Activated T-helper 1 cell treated with anti-CD3 and anti-CD28 coated beads, Interleukin-12 subunit alpha, Interleukin-12 subunit beta, Interleukin-2, Interleukin-4 antibody, amounts not matched to agents 30 ng/mL and 10 ng/mL and 1 ng/mL, durations not matched to agents 14 hours and 24 hours and 36 hours (primary cell): ENCODE measurements at regions of chr1 and their contacts with region 1.

Region 1: DNA sequence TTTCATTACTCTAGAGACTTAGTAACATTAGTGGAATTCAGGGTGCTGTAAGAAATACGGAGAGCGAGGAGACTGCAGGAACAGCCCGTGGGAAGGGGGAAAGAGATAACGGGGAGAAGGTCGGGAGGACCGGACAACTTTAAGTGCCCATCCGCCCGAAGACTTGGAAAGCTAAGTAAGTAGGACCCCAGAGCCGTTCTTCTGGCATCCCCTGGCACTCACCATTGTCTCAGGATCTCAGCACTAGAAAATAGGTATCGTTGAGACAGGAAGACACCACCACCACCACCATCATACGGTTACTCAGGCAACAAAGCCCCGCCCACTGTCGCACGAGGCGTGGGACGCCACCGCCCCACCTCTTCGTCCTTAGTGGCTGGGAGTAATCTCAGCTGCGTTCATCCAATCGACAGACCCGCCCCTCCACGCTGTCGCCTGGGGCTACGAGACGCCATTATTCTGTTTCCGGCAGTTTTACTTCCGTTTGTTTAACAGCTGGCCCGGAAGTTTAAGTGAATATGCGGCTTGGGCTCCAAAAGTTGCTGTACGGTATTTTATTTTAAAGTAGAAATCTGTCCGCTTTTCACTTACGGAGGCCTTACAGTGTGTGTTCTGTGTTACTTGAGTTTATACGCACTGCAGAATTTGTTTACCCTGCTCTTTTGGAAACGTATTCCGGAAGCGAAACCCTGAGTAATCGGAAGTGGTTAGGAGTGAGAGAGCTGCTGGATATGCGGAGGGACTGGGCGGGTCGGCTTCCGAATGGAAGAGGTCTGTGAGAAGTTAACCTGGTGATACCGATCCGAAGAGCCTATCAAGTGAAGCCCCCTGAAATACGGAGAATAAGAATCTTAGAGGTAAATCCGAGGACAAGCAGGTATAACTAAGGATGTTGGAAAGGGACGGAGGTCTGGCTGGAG is at the starts of genes BLZF1 and NME7:
- DNase-seq: peak; percentile 99
- H3K4me3 Mint-ChIP-seq: no peak within 1 kb of the TSS
- H3K27ac Mint-ChIP-seq: peak within 1 kb of the TSS; percentile 36
- H3K4me1 Mint-ChIP-seq: peaks cover 35% of the 10 kb centered on the region
- H3K27me3 Mint-ChIP-seq: no peaks in the 10 kb centered on the region
- total RNA-seq, gene BLZF1: 15.1 and 16.1 TPM in 2 replicates
- total RNA-seq, gene NME7: 13.9 and 25.8 TPM in 2 replicates

Region 2: DNA sequence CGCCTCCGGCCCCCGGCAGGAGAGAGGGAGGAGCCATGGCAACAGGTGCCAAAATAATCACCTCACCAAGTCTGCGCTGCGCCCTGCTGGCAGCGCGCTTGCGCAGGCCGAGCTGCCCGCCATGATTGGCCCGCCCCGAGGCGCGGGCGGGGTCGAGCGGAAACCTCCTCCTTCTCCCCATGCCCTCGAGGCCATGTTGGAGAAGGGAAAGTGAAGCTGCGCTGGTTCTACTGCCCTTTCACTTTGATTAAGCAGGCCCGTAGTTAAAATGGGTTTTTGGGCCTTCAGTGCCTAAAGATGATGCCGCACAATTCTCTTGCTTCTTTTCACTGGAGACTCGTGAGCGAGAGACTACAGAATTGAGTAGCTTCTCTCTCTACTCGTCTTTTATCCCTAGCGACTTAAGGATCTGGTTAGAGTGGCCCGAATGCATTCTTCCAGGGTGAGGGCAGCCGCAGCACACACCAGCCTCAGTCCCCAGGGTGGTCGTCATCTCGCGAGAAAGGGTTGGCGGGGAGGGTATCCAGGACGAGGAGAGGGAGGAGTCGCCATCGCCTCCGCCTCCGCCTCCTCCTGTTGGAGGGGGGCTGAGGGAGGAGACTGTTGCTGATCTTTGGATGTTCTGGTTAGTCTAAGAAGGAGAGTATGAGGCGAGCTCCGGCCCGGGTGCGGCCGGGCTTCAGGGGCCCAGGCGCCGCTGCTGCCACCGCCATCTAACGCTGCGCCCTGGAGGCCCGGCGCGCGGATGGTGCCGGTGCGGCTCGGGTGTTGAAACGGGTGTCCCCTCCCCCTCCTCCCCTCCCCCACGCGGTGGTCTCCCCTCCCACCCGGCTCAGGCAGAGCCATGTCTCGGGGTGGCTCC is 1431.4 kb before region 1 on chr1 and contains the start of gene DCAF6:
- intact Hi-C with region 1: loop called (anchors 1 kb)
- DNase-seq: peak; percentile 98
- H3K4me3 Mint-ChIP-seq: peak within 1 kb of the TSS; percentile 91
- H3K27ac Mint-ChIP-seq: peak within 1 kb of the TSS; percentile 98
- H3K4me1 Mint-ChIP-seq: peaks cover 41% of the 10 kb centered on the region
- H3K27me3 Mint-ChIP-seq: no peaks in the 10 kb centered on the region
- total RNA-seq, gene DCAF6: 20.9 and 24.0 TPM in 2 replicates

Region 3: DNA sequence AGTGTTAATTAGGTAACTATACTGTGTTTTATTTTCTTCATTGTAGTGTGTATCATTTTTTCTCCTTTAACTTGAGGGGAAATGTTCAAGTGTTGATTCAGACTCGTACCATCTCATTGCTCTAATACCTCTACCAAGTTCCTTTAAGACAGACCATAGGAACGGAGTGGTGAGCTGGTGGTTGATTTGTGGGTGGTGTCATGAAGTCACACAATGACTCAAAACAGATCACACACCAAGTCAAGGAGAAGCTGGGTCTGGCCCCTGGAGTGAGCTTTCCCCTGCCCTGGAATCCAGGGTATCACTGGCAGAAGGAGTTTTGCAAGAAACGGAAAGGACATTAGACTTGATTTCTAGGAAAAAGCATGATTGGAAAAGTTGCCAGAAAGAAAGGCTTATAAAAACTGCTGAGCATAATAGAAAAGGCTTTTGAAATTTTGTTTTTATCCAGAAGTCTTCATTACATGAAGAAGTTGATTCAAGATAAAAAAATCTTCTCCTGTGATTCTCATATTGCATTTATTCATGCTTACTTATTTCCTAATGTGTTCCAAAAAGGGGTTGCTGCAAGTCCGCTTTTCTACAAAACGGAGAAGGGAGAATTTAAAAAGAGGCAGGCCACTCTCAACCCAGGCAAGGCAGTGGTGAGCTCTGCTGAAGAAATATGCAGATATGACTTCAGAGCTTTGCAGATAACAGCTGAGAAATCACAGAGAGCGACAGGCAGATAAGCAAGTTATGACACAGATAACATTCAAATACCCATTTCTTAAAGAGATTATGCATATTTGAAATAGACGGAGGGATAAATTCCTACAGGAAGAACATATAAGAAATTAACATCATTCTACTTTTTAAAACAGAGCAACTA is 1007.4 kb before region 1 on chr1:
- intact Hi-C with region 1: loop called (anchors 5 kb)
- DNase-seq: peak; percentile 36
- H3K4me3 Mint-ChIP-seq: peak overlapping the region; percentile 12
- H3K27ac Mint-ChIP-seq: peak overlapping the region; percentile 68
- H3K4me1 Mint-ChIP-seq: peaks cover 43% of the 10 kb centered on the region
- H3K27me3 Mint-ChIP-seq: peaks cover 3% of the 10 kb centered on the region

Region 4: GRCh38 chr1:169091480-169091941 is 276.2 kb before region 1 on chr1:
- intact Hi-C with region 1: loop called (anchors 5 kb)
- DNase-seq: no peak
- H3K4me3 Mint-ChIP-seq: no peak overlapping the region
- H3K27ac Mint-ChIP-seq: no peak overlapping the region
- H3K4me1 Mint-ChIP-seq: peaks cover 12% of the 10 kb centered on the region
- H3K27me3 Mint-ChIP-seq: peaks cover 6% of the 10 kb centered on the region

Region 5: GRCh38 chr1:169383449-169383848 is 15.7 kb after region 1 on chr1:
- intact Hi-C with region 1: loop called (anchors 1 kb)
- DNase-seq: no peak
- H3K4me3 Mint-ChIP-seq: no peak overlapping the region
- H3K27ac Mint-ChIP-seq: no peak overlapping the region
- H3K4me1 Mint-ChIP-seq: no peaks in the 10 kb centered on the region
- H3K27me3 Mint-ChIP-seq: no peaks in the 10 kb centered on the region

Region 6: DNA sequence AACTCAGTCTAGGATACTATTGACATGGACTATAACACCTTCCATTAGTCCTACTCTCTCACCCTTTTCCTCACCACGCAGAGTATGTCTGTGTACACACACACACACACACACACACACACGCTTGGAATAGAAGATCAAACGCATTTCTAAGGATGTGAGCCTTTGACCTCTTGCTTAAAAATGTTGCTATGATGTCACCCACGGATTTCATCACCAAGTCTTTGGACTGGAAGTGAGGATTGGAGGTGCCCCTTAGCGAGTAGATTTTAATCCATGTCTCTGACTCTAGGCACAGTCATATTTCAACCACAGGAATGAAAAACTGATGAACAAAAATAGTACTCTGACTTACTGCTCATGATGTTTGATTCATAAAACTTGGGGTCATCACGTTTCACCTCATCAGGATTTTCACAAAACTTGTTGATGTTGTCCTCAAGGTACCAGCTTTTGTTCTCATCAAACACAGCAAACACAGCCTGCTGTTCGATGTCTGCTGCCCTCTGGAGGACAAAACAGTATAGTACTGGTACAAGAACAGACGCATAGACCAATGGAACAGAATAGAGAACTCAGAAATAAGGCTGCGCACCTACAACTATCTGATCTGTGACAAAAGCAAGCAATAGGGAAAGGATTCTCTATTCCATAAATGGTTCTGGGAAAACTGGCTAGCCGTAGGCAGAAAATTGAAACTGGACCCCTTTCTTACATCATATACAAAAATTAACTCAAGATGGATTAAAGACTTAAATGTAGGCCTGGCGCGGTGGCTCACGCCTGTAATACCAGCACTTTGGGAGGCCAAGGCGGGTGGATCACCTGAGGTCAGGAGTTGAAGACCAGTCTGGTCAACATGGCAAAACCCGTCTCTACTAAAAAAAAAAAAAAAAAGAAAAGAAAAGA is 178.6 kb after region 1 on chr1:
- intact Hi-C with region 1: loop called (anchors 1 kb)
- DNase-seq: peak; percentile 40
- H3K4me3 Mint-ChIP-seq: no peak overlapping the region
- H3K27ac Mint-ChIP-seq: no peak overlapping the region
- H3K4me1 Mint-ChIP-seq: peaks cover 9% of the 10 kb centered on the region
- H3K27me3 Mint-ChIP-seq: no peaks in the 10 kb centered on the region

Region 7: DNA sequence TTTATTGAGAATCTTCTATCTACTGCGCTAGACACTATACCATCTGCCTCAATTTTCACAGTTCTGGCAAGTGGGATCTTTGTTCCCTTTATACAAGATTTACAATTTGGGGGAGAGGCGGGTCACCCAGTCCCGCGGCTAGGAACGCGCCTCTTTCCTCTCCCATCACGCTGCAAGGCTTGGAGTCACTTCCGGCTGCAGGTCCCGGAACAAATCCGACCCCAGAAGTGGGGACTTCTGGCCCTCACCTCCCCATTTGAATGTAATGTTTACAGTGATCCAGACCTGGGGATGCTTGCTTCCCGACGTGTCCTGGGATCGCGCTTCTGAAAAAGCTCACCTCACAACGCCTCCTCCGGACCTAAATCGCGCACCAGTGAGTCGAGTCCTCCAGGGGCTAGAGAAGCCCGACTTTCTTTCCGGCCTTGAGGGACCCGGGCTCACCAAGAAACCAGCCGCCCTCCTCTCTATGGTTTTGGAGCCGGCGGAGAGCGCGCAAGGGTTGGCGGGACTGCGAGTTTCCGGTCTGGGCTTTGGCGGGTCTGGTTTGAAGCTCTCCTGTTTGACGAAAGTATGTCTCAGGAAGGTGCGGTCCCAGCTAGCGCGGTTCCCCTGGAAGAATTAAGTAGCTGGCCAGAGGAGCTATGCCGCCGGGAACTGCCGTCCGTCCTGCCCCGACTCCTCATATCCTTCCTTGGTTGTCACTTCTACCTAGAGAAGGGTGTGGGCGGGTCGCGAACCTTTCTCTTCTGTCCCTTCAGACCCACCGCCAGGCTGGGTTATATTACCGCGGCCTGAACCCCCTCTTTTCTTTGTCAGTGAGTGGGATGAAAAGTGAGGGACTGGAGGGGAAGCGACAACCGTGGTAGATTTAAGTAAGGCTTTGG is 427.0 kb after region 1 on chr1 and contains the start of gene METTL18:
- intact Hi-C with region 1: loop called (anchors 2 kb)
- DNase-seq: peak; percentile 90
- H3K4me3 Mint-ChIP-seq: peak within 1 kb of the TSS; percentile 87
- H3K27ac Mint-ChIP-seq: peak within 1 kb of the TSS; percentile 86
- H3K4me1 Mint-ChIP-seq: peaks cover 55% of the 10 kb centered on the region
- H3K27me3 Mint-ChIP-seq: no peaks in the 10 kb centered on the region
- total RNA-seq, gene METTL18: 9.0 and 9.3 TPM in 2 replicates